ENCODE measurements at regions of chr9 and their contacts with region 1.

Region 1: DNA sequence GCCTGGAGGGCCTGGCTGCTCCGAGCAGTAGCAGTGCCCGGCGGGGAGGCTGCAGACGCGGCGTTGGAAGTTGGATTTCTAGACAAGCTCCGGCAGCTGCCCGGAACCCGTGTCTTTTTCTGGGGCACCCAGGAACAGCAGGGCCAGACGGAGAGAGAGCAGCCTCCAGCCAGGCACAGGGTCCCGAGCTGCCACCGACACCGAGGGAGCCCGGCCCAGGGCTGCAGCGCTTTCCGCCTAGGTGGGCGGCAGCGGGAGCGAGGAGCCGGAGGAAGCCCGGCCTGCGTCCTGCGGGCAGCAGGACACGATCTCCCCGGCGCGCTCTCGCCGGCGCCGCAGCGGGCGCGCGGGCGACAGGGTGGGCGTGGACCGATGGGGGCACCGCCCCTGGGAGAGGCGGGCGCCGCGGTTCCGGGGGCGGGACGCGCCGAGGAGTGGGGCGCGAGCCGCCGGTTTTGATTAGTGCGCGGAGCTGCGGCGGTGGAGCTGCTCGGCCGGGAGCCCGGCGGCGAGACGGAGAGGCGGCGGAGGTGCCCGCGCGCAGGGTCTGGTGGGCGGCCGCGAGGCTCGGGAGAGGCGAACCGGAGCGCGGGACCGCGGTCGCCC is at the start of gene UGCG:
- DNase-seq: peak; percentile 60 to 91
- H3K4me3 ChIP-seq: peak within 1 kb of the TSS; percentile 79 to 98 (median 84)
- H3K27ac ChIP-seq: peak within 1 kb of the TSS; percentile 71; the same call in 1 of the 2 replicates
- H3K4me1 ChIP-seq: peaks cover 0 to 5% (median 0%) of the 10 kb centered on the region in 4 experiments; a peak in 3 of 7 replicates
- H3K27me3 ChIP-seq: no peaks in the 10 kb centered on the region
- CTCF ChIP-seq: no peak
- EP300 ChIP-seq: no peak
- POLR2A ChIP-seq: peak; percentile 65 to 94
- RAD21 ChIP-seq: no peak
- total RNA-seq, gene UGCG: 31.4 and 34.0 TPM in 2 replicates

Region 2: DNA sequence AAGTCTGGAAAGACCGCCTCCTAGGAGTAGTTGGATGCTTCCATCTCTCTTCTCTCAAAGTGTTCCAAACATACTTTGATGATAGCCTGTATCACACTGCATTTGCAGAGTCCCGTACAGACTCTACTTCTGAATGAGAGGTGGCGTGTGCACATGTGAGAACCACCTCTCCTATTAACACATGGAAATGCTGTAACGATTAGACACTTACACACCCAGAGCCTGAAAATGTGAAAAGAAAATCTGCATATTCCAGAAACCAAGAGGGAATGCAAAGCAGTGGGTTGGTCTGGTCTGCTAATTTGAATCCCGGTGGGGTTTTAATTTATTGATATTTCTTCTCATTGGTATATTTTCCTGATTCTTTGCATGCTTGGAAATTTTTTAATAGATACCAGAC is 10.7 kb after region 1 on chr9:
- CTCF ChIA-PET with region 1: no interaction called
- POLR2A ChIA-PET with region 1: interaction called, 10 read pairs
- DNase-seq: no peak
- H3K4me3 ChIP-seq: no peak overlapping the region
- H3K27ac ChIP-seq: no peak overlapping the region
- H3K4me1 ChIP-seq: no peaks in the 10 kb centered on the region; a peak in 1 of 7 replicates
- H3K27me3 ChIP-seq: no peaks in the 10 kb centered on the region
- CTCF ChIP-seq: no peak
- EP300 ChIP-seq: no peak
- POLR2A ChIP-seq: no peak
- RAD21 ChIP-seq: no peak